H1 (cell line): ENCODE measurements at regions of chr16 and their contacts with region 1.

Region 1: DNA sequence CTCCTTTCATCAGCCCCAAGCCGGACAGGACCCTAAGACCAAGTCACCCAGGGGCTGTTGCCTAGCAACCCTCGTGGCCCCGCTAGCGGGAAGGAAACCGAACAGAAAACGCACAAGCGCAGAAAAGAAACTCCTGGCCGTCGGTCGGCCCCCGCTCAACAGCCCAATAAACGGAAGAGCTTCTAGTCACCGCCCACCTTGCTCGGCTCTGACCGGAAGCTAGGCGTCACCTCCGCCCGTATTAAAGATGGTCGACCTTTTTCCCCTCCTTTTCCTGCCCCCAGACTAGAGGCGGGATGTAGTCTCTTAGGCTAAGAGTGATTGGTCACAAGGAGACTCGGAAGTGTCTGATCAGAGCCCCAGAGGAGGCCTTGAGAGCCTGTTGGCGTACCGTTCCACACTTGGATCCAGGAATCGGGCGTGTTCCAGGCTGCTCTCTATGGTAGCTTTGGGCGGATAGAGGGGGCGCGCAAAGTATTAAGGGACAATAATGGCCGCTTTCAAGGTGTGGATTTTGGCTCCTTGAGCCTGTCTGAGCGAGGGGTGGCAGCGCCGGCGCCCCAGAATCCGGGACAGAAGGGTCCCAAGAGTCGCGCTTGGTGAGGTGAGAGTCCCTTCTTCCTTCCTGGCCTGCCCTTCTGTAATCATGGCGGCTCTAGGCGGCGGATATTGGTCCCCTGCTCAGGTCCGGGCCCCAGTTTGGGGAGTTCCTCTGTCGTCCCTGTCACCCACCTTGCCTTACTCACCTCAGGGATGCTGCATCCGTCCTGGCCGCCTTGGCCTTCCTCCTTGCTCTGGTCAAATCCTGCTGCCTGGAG is at the starts of genes DHX38 and TXNL4B:
- DNase-seq: peak; percentile 85 to 94
- H3K4me3 ChIP-seq: peak within 1 kb of the TSS; percentile 93 to 100 (median 98)
- H3K27ac ChIP-seq: peak within 1 kb of the TSS; percentile 93
- H3K4me1 ChIP-seq: peaks cover 0 to 6% (median under 1%) of the 10 kb centered on the region in 4 experiments; a peak in 2 of 7 replicates
- H3K27me3 ChIP-seq: no peaks in the 10 kb centered on the region
- CTCF ChIP-seq: no peak
- EP300 ChIP-seq: no peak
- POLR2A ChIP-seq: peak; percentile 89 to 92
- RAD21 ChIP-seq: no peak
- total RNA-seq, gene DHX38: 53.5 and 58.3 TPM in 2 replicates
- total RNA-seq, gene TXNL4B: 8.6 and 10.6 TPM in 2 replicates

Region 2: GRCh38 chr16:72072514-72073342 is 20.9 kb before region 1 on chr16:
- CTCF ChIA-PET with region 1: interaction called, 108 read pairs
- POLR2A ChIA-PET with region 1: interaction called, 23 read pairs
- DNase-seq: no peak
- H3K4me3 ChIP-seq: no peak overlapping the region
- H3K27ac ChIP-seq: peak overlapping the region; percentile 68
- H3K4me1 ChIP-seq: peaks cover 0 to 9% (median 2%) of the 10 kb centered on the region in 4 experiments; a peak in 2 of 7 replicates
- H3K27me3 ChIP-seq: no peaks in the 10 kb centered on the region
- CTCF ChIP-seq: no peak
- EP300 ChIP-seq: no peak
- POLR2A ChIP-seq: peak; percentile 45 to 67
- RAD21 ChIP-seq: no peak

Region 3: DNA sequence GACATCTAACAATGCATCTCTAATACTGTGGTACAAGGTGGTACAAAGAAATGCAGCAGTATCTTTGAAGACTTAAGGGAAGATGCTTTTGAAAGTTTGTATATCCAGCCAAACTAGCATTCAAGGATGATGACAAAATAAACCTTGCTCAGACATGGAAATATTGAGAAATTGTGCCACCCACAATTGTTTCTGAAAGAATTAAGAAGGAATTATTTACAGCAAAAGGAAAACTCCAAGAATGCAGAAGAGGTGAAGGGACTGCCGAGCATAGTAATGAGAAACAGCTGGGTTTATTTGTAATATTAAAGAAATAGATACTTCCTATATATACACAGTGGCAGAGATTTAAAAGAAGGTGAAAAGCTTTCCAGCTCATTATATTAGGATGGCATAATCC is 48.8 kb after region 1 on chr16:
- CTCF ChIA-PET with region 1: no interaction called
- POLR2A ChIA-PET with region 1: no interaction called
- DNase-seq: no peak
- H3K4me3 ChIP-seq: no peak overlapping the region
- H3K27ac ChIP-seq: no peak overlapping the region
- H3K4me1 ChIP-seq: 0 out of 7 replicates have a peak, but pooled peaks cover 0 to 2% (median 0%) of the 10 kb centered on the region in 4 experiments
- H3K27me3 ChIP-seq: no peaks in the 10 kb centered on the region
- CTCF ChIP-seq: no peak
- EP300 ChIP-seq: no peak
- POLR2A ChIP-seq: no peak
- RAD21 ChIP-seq: no peak

Region 4: GRCh38 chr16:72172105-72173034 is 78.7 kb after region 1 on chr16 and contains the start of gene PMFBP1:
- CTCF ChIA-PET with region 1: no interaction called
- POLR2A ChIA-PET with region 1: no interaction called
- DNase-seq: no peak
- H3K4me3 ChIP-seq: no peak within 1 kb of the TSS
- H3K27ac ChIP-seq: no peak within 1 kb of the TSS
- H3K4me1 ChIP-seq: no peaks in the 10 kb centered on the region
- H3K27me3 ChIP-seq: no peaks in the 10 kb centered on the region
- CTCF ChIP-seq: no peak
- EP300 ChIP-seq: no peak
- POLR2A ChIP-seq: no peak
- RAD21 ChIP-seq: no peak
- total RNA-seq, gene PMFBP1: 1.2 and 1.6 TPM in 2 replicates